Left cardiac atrium (tissue), 4 donors: ENCODE measurements at regions of chr2 and their contacts with region 1.

Region 1: DNA sequence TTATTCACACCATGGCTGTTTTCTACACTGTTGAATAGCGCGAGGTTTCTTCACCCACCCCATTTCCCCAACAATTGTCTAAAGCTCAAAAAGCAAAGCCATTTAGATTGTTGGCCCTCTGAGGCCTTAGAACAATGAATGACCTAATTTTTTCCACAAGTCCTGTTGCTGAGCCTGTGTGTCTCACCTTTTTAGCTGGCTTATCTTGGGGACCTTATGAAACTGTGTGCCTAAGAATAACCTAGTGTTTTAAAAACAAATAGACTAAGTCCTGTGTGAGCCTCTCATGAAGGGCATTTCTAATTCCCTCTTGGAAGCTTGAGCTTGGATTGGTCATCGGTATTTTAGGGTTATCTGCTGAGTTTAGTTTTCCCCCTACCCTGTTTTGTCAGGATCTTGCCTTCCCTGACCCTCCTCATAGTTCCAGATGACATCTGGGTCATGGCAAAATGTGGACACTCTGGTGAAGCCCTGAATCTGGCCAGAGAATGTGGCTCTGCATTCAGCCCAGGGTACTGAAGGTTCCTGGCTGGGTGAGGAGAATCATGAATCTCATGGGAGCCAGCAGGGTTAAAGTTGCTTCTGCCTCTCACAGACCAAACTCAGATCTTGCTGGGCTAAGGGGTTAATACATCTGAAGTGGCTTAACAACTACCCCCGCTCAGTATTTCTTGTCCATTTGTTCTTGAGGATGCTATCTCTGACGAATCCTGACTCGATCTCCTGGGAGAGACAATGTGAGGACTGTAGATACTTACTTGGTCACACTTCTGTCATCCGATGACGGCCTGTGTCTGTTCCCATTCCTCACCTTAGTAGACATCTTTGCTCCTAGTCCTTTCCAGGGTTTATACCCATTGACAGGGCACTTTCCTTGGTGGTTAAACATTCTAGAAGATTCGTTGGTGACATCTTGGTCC is 104.2 kb upstream of the MAP4K3 start:
- DNase-seq: no peak
- ATAC-seq: peak; percentile 57 to 76

Region 2: GRCh38 chr2:39504790-39505335 is 36.4 kb before region 1 on chr2:
- intact Hi-C with region 1: no loop called
- DNase-seq: no peak
- ATAC-seq: peak; percentile 41 to 58

Region 3: DNA sequence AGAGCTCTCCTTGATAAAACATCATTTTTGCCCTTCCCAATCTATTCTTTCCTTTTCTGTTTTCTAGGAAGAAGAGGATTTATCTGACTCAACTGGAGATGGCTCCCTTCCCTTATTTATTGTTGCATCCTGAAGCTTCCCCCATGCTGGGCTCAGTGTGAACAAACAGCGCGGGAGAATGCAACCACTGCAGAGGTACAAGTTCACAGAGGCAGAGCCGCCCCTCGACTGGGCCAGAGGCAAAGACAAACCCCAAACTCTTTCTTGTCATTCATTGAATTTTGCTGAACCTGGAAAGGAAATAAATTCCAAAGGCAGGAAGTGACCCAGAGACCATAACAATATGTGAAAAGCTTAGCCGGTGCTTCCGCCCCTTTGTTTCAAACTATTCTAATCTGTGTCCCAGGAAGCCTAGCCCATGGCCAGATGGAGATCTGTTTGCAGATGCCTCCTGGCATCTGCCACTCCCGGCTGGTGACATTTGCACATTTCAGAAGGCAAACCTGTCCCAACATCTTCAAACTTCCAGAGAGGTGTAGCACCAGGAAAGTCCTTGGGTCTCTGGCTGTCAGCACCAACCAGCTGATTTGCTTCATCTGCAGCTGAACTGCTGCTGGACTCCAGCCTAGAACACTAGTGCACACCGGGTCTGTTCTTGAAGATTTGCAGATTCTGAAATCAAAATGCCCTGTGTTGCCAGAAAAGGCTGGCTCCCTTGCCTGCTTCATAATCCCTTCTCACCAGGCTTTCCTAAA is 24.7 kb before region 1 on chr2:
- intact Hi-C with region 1: loop called in 1 of 2 experiments (anchors 2 kb)
- DNase-seq: peak; percentile 57
- ATAC-seq: peak; percentile 61 to 64

Region 4: GRCh38 chr2:39845460-39846146 is 304.3 kb after region 1 on chr2:
- intact Hi-C with region 1: no loop called
- DNase-seq: no peak
- ATAC-seq: no peak

Region 5: GRCh38 chr2:40240070-40240469 is 698.8 kb after region 1 on chr2:
- intact Hi-C with region 1: no loop called
- DNase-seq: peak; percentile 88
- ATAC-seq: peak; percentile 95

Region 6: GRCh38 chr2:40287195-40287594 is 745.9 kb after region 1 on chr2:
- intact Hi-C with region 1: no loop called
- DNase-seq: no peak
- ATAC-seq: no peak